ENCODE measurements at regions of chr1 and their contacts with region 1.

Region 1: GRCh38 chr1:44652445-44653106 is 21.7 kb downstream of the TMEM53 start:
- DNase-seq: peak; percentile 69 to 94
- H3K4me3 ChIP-seq: no peak overlapping the region
- H3K27ac ChIP-seq: 0 out of 2 replicates have a peak overlapping the region, but pooled peaks have one; percentile 20
- H3K4me1 ChIP-seq: peaks cover 0 to 17% (median 9%) of the 10 kb centered on the region in 4 experiments; a peak in 5 of 7 replicates
- H3K27me3 ChIP-seq: no peaks in the 10 kb centered on the region
- CTCF ChIP-seq: peak; percentile 94 to 100 (median 99)
- EP300 ChIP-seq: no peak
- POLR2A ChIP-seq: no peak
- RAD21 ChIP-seq: peak; percentile 93 to 95

Region 2: GRCh38 chr1:44571712-44572571 is 80.6 kb before region 1 on chr1:
- CTCF ChIA-PET with region 1: interaction called, 10 read pairs
- POLR2A ChIA-PET with region 1: no interaction called
- DNase-seq: no peak
- H3K4me3 ChIP-seq: no peak overlapping the region
- H3K27ac ChIP-seq: no peak overlapping the region
- H3K4me1 ChIP-seq: peaks cover 4 to 6% (median 5%) of the 10 kb centered on the region in 4 experiments; a peak in 6 of 7 replicates
- H3K27me3 ChIP-seq: no peaks in the 10 kb centered on the region
- CTCF ChIP-seq: peak in 2 of 3 experiments; percentile 39 to 68; a peak in 3 of 4 replicates
- EP300 ChIP-seq: no peak
- POLR2A ChIP-seq: no peak
- RAD21 ChIP-seq: peak; percentile 18 to 49; a peak in 2 of 4 replicates

Region 3: DNA sequence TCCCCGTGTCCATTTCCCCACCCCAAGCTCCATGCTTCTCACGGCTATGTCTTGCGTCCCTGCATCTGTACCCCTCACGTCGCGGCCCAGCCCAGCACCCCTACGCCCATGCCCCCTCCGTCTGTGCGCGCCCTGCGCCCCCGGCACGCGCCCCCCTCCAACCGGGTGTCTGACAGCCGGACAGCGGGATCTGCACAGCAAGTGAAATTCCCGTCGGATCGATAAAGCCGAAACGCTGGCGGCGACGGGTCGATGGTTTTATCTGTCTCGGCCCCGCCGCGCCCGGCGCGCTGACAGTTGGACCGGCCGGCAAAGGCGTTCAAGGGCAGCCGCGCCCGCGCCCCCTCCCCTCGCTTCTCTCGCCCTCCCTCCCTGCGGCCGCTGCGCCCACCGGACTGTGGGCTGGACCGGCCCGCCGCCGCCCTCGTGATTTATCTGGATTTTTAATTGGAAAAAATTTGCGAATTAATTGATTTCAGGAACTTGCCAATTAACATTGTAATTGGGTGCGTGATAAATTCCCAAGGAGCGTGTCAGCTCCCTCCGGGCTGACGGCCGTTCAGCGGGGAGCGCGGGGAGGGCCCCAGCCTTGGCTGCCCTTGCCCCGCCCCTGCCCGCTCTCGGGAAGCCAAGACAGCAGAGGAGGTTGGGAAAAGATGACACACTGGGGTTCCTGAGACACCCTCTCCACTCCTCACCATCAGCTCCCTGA is 35.4 kb before region 1 on chr1:
- CTCF ChIA-PET with region 1: interaction called, 129 read pairs
- POLR2A ChIA-PET with region 1: interaction called, 633 read pairs
- DNase-seq: peak in 1 of 2 experiments; percentile 69
- H3K4me3 ChIP-seq: peak overlapping the region; percentile 34 to 67 (median 53)
- H3K27ac ChIP-seq: no peak overlapping the region
- H3K4me1 ChIP-seq: peaks cover 0 to 7% (median 6%) of the 10 kb centered on the region in 4 experiments; a peak in 6 of 7 replicates
- H3K27me3 ChIP-seq: peaks cover 0 to 4% (median 2%) of the 10 kb centered on the region in 4 experiments; a peak in 3 of 7 replicates
- CTCF ChIP-seq: no peak
- EP300 ChIP-seq: no peak
- POLR2A ChIP-seq: no peak
- RAD21 ChIP-seq: no peak

Region 4: GRCh38 chr1:44636688-44637598 is 15.6 kb before region 1 on chr1:
- CTCF ChIA-PET with region 1: interaction called, 197 read pairs
- POLR2A ChIA-PET with region 1: interaction called, 633 read pairs
- DNase-seq: no peak
- H3K4me3 ChIP-seq: no peak overlapping the region
- H3K27ac ChIP-seq: no peak overlapping the region
- H3K4me1 ChIP-seq: peaks cover 0 to 5% (median 3%) of the 10 kb centered on the region in 4 experiments; a peak in 4 of 7 replicates
- H3K27me3 ChIP-seq: no peaks in the 10 kb centered on the region
- CTCF ChIP-seq: no peak
- EP300 ChIP-seq: no peak
- POLR2A ChIP-seq: no peak
- RAD21 ChIP-seq: no peak

Measured in H1 (cell line).